Heart left ventricle (tissue), 16 donors: ENCODE measurements at regions of chr17 and their contacts with region 1.

Region 1: DNA sequence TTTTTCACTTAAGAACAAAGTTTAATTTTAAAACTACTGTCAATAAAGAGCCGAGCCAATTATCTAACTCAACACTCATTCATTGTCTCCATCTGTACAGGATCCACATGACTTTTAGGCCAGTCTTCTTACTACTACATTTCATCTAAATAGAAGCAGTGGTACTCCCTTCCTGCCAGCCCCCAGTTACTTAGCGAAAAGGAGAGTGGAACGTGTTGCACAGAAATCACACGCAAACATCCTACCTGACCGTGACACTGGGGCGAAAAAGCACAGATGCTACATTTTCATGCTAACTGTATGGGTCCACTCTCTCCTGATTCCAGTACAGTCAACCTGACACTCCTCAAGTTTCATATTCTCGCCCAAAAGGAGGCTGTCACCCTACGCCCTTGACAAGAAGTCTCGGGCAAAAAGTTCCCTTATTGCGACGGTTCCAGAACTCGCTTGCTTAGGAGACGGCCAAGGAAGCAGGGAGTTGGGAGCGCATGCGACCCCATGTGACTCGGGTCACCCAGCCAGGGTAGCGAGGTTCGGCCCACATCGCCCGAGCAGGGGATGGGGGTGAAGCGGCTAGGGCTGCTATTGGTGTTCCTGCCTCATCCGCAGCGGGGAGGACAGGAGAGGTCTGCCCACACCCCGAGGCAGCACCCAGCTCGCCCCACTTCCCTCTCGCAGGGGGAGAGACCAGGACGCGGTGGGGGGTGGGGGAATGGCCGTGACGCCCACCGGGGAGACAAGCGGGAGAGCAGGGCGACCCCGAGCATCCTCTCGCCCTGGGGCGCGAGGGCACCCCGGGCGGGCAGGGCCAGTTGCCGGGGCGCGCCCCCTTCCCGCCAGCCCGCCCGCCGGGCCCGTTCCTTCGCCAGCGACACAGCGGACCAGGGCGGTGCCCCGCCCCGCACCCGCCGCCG is 935 bp downstream of the GNA13 start:
- DNase-seq: peak; percentile 65 to 79 (median 72)
- ATAC-seq: peak in 3 of 4 donors; percentile 40 to 45 (median 40)
- H3K4me3 ChIP-seq: peak overlapping the region; percentile 73 to 94 (median 84)
- H3K27ac ChIP-seq: peak overlapping the region; percentile 91 to 100 (median 98)
- H3K4me1 ChIP-seq: peaks cover 4 to 66% (median 40%) of the 10 kb centered on the region in 12 donors
- H3K27me3 ChIP-seq: no peaks in the 10 kb centered on the region
- CTCF ChIP-seq: no peak
- POLR2A ChIP-seq: peak in 1 of 2 donors; percentile 32

Region 2: DNA sequence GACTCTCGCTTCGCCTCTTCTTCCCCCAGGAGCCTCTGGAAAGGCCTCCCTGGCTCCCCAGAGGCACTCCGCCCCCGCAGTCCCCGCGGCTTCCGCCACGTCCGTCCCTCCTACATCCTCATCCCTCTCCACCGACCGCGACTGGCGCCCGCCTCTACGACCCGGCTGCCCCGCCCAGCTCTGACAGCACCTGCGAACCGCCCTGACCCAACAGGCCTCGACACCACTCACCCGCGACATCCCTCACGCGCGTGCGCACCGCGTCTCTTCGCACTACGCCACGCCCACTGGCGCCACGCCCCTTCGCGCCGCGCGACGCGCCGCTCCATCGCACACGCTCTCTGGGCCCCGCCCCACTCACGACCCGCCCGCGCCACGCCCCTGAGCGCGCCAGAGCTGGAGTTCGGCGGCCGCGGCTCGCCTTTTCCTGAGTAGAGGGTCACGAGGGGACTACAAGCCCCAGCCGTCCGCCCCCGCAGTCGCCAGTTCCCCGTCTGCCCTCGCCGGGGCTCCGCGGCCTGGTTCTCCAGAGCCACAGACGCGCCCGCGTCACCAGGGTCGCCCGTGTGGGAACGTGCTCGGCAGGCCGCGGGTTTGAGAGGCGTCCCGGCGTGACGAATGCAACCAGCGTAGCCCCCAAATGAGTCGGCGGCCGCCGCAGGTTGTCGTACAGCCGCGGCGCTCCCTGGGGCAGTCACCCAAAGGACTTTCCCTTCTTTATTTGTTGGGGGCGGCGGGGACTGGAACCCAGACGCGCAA is 80.1 kb before region 1 on chr17:
- intact Hi-C with region 1: loop called (anchors 1 to 10 kb)
- DNase-seq: peak; percentile 94 to 98 (median 96)
- ATAC-seq: peak; percentile 90 to 98 (median 96)
- H3K4me3 ChIP-seq: peak overlapping the region; percentile 59 to 98 (median 82)
- H3K27ac ChIP-seq: peak overlapping the region; percentile 94 to 100 (median 98)
- H3K4me1 ChIP-seq: peaks cover 0 to 26% (median 16%) of the 10 kb centered on the region in 12 donors
- H3K27me3 ChIP-seq: no peaks in the 10 kb centered on the region
- CTCF ChIP-seq: peak in 1 of 12 donors; percentile 4
- POLR2A ChIP-seq: peak; percentile 47 to 89

Region 3: DNA sequence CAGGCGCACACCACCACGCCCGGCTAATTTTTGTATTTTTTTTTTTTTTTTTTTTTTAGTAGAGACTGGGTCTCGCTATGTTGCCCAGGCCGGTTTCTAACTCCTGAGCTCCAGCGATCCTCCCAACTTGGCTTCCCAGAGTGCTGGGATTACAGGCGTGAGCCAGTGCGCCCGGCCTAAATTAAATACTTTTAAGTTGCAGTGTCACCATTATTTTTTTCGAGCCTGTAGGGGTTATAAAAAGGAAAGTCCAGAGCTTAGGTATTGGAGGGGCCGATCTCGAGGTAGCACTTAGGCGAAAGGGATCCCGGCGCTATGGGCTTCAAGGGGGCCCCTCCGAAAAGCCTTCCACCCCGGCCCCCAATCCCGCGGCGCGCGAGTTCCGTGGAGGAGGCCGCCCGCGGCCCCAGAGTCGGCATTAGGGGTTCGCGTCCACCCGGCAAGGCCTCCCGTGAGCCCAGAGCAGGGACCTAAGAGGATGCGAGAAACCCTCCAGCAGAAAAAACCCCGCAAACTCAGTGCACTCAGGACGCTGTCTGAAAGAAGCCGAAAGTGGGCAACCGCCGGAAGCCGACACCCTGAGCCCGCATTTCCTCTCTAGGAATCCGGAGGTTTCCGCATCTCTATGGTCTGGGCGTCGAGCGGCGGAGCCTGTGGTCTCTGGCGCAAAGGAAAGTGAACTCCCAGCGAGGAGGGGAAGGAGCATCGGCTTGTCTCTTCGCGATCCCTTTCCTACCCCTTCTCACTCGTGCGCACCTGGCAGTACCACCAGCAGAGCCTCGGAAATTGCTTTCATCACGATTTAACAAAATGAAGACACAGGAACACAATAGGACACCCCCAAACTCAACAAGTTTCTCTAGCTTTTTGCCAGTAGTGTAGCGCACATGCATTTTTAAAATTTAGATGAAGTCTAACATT is 67.5 kb after region 1 on chr17:
- intact Hi-C with region 1: loop called in 1 of 10 experiments (anchors 5 kb)
- DNase-seq: peak; percentile 85 to 89 (median 86)
- ATAC-seq: peak; percentile 74 to 98 (median 92)
- H3K4me3 ChIP-seq: peak overlapping the region; percentile 36 to 82 (median 73)
- H3K27ac ChIP-seq: peak overlapping the region; percentile 71 to 94 (median 87)
- H3K4me1 ChIP-seq: peaks cover 0 to 12% (median 3%) of the 10 kb centered on the region in 12 donors
- H3K27me3 ChIP-seq: peaks cover 0 to under 1% (median 0%) of the 10 kb centered on the region in 9 donors
- CTCF ChIP-seq: no peak
- POLR2A ChIP-seq: peak in 1 of 2 donors; percentile 25

Region 4: DNA sequence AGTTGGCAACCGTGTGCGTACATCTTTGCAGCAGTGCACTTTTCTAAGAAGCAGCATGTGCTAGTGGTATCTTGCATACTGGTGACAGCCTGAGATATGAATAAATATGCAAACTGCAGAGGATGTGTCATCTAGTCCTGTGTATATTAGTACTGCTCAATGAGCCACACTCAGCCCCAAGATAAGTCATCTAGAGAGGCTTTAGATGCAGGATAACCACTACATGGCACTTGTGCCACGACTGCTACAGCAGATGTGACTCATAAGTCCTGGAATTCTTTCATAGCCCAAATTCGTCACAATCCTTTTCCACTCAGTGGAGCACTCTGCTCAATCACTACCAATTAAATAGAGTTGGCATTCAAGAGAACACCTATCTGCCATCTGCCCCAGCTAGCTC is 334.3 kb after region 1 on chr17:
- intact Hi-C with region 1: no loop called
- DNase-seq: no peak
- ATAC-seq: no peak
- H3K4me3 ChIP-seq: no peak overlapping the region
- H3K27ac ChIP-seq: no peak overlapping the region
- H3K4me1 ChIP-seq: no peaks in the 10 kb centered on the region
- H3K27me3 ChIP-seq: peaks cover 0 to 3% (median 0%) of the 10 kb centered on the region in 9 donors
- CTCF ChIP-seq: no peak
- POLR2A ChIP-seq: no peak